ENCODE measurements at regions of chr12 and their contacts with region 1.

Region 1: GRCh38 chr12:57583008-57583831 is 7.8 kb upstream of the PIP4K2C start:
- H3K4me3 Mint-ChIP-seq: no peak overlapping the region
- H3K27ac Mint-ChIP-seq: no peak overlapping the region
- H3K4me1 Mint-ChIP-seq: peaks cover 25% of the 10 kb centered on the region
- H3K27me3 Mint-ChIP-seq: peaks cover 24% of the 10 kb centered on the region

Region 2: GRCh38 chr12:57535764-57536596 is 47.2 kb before region 1 on chr12:
- intact Hi-C with region 1: no loop called
- H3K4me3 Mint-ChIP-seq: no peak overlapping the region
- H3K27ac Mint-ChIP-seq: no peak overlapping the region
- H3K4me1 Mint-ChIP-seq: peaks cover 8% of the 10 kb centered on the region
- H3K27me3 Mint-ChIP-seq: no peaks in the 10 kb centered on the region

Region 3: DNA sequence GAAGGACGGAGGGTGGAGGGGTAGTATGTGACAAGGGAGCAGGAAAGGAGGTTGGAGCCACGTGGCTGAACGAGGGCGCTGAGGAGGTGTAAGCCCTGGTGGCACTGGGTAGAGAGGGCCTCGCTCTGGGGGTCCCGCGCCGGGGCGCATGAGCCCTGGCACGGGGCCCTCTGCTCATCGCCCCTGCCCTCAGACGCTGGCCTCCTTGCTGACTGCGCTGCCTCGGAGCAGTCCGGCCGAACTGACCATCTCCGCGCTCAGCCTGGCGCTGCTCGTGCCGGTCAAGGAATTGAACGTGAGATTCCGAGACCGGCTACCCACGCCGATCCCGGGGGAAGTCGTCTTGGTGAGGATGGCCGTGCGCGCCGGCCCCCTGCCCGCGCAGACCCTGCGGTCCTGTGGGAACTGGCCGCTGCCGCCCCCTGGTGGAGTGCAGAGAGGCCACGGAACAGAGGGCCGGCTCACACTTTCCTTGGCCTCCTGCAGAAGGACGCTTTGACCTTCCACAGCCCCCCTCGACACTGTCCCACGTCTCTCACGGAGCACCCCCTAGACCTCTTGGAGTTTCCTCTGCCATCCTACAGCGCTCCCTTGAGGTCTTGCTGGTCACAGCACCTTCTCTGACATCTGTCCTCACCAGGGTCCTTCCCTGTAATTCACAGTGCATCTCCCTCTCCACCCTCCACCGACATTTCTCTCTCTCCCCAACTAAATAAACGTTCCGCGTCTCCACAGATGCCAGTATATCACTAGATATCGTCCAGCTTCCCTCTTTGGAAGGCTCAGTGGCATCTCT is 38.5 kb after region 1 on chr12:
- intact Hi-C with region 1: loop called (anchors 1 kb)
- H3K4me3 Mint-ChIP-seq: peak overlapping the region; percentile 73
- H3K27ac Mint-ChIP-seq: no peak overlapping the region
- H3K4me1 Mint-ChIP-seq: peaks cover 49% of the 10 kb centered on the region
- H3K27me3 Mint-ChIP-seq: peaks cover 97% of the 10 kb centered on the region

Region 4: DNA sequence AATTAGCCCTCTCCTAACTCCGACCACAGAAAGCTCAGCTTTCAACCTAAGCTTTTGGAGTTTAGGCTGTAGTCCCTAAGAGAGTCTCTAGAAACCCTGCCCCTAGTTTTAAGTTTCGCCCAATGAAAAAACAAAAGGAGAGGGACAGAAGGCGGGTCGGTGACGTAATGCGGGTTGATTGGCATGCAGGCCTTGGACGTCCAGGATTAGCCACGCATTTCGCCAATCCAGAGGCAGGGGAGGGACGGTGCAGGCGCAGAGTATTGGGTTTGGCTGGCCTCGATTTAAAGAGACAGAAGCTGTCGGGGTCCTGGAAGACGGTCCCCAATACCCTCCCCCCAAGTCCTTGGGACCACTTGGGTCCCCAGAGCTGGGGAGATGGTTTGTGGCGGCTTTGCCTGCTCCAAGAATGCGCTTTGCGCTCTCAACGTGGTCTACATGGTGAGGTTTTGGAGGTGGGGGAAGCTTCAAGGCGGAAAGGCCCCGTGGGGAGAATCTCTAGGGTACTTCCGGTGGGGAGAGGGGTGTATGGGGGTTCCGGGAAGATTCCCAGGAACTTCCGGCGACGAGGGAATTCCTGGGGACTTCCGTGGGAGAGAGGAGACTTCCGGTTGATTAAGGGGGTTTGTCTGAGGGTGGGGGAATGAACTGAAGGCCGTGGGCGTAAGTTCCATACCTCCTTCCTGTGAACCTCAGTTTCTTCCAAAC is 161.7 kb after region 1 on chr12 and contains the start of gene TSPAN31:
- intact Hi-C with region 1: loop called (anchors 5 kb)
- H3K4me3 Mint-ChIP-seq: peak within 1 kb of the TSS; percentile 96
- H3K27ac Mint-ChIP-seq: peak within 1 kb of the TSS; percentile 99
- H3K4me1 Mint-ChIP-seq: peaks cover 60% of the 10 kb centered on the region
- H3K27me3 Mint-ChIP-seq: no peaks in the 10 kb centered on the region

Region 5: GRCh38 chr12:57904848-57905811 is 321.9 kb after region 1 on chr12:
- intact Hi-C with region 1: loop called (anchors 10 kb)
- H3K4me3 Mint-ChIP-seq: no peak overlapping the region
- H3K27ac Mint-ChIP-seq: no peak overlapping the region
- H3K4me1 Mint-ChIP-seq: peaks cover 6% of the 10 kb centered on the region
- H3K27me3 Mint-ChIP-seq: peaks cover 8% of the 10 kb centered on the region